Right ventricle myocardium inferior (tissue), 1 donor: ENCODE measurements at regions of chr16 and their contacts with region 1.

Region 1: GRCh38 chr16:79601931-79602627 is 1.5 kb upstream of the MAF start:
- DNase-seq: no peak
- ATAC-seq: peak; percentile 33

Region 2: DNA sequence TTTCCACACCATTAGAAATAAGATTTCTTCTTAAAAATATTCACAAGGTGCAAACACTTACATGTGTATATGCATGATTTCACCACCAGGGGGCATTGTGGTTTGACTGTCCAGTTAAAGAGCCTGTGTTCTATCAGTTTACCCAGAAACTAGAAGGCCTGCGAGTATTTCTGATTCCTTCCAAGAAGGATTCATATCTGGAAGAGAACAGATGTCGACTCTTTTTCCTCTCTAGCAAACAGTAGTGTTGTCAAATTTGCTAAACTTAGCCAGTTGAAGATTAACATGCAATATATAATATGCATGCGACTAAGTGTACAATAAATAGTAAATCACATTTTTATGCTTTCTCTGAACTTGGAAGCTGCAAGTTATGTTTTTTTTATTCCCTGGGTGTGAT is 1098.5 kb before region 1 on chr16:
- intact Hi-C with region 1: loop called (anchors 2 kb)
- DNase-seq: no peak
- ATAC-seq: no peak

Region 3: GRCh38 chr16:78925083-78925767 is 676.9 kb before region 1 on chr16:
- intact Hi-C with region 1: loop called (anchors 5 kb)
- DNase-seq: no peak
- ATAC-seq: peak; percentile 54

Region 4: GRCh38 chr16:79261481-79261940 is 340.6 kb before region 1 on chr16:
- intact Hi-C with region 1: loop called (anchors 5 kb)
- DNase-seq: peak; percentile 69
- ATAC-seq: peak; percentile 47

Region 5: GRCh38 chr16:79542237-79542774 is 59.8 kb before region 1 on chr16:
- intact Hi-C with region 1: loop called (anchors 2 kb)
- DNase-seq: peak; percentile 77
- ATAC-seq: peak; percentile 89

Region 6: DNA sequence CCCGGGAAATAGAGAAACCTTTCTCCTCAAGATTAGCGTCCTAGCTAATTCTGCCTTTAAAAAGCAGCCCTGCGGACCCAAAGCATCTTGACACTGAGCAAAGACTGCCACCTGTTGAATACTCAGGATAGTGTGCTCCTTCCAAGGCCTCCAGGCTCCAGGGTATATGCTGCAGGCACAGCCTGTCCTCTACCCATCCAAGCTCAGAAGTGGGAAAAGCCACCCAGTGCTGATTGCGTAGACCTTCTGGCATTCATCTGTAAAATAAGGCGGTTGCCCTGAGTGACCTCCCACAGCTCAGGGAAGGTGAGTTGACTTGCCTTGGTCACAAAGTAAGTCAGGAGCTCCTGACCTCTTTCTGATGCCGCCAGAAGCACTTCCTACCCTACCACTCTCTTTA is 482.6 kb after region 1 on chr16:
- intact Hi-C with region 1: loop called (anchors 5 kb)
- DNase-seq: no peak
- ATAC-seq: peak; percentile 97